Aorta (tissue), 5 donors: ENCODE measurements at regions of chr3 and their contacts with region 1.

Region 1: GRCh38 chr3:150114873-150115540 is 144.3 kb upstream of the PFN2 start:
- DNase-seq: no peak
- ATAC-seq: no peak
- H3K4me3 ChIP-seq: no peak overlapping the region
- H3K27ac ChIP-seq: peak overlapping the region in 1 of 2 donors; percentile 12
- H3K4me1 ChIP-seq: peaks cover 0 to 11% of the 10 kb centered on the region in 2 donors
- H3K27me3 ChIP-seq: no peaks in the 10 kb centered on the region

Region 2: DNA sequence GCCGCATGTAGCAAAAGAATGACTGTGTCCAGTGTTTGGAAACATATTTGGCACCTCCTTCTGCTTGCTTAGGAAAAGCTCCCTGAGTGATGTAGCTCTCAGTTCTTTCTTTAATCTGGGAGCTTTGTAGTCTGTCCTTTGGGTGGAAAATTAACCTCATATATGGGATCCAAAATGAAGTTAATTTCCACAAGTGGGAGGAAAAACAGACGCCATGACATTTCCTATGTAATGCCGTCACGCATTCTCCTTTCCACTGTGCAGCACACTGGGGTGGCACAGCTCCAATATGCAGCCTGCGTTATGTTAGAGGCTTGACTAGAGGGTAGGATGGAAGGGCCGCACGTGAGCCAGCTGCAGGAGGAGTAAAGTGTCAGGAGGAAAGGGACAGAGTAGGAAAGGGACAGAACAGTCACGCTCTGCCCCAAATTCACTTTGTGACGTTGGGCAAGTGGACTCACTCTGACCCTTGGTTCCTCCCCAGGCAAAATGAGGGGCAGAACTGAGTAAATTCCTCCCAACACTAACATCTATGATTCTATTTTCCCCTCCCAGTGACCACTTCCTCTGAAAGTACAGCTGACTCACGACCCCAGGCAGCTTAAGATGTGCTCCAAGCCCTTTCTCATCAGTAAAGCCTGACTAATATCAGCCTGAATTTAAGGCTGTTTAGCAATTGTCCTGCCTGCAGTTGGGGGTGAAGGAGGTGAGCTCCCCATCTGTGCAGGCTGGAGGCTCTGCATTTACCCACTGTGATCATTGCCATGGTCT is 32.2 kb after region 1 on chr3:
- intact Hi-C with region 1: loop called in 1 of 2 experiments (anchors 5 kb)
- DNase-seq: peak; percentile 48 to 75
- ATAC-seq: no peak
- H3K4me3 ChIP-seq: peak overlapping the region in 1 of 2 donors; percentile 3
- H3K27ac ChIP-seq: peak overlapping the region; percentile 37 to 52
- H3K4me1 ChIP-seq: peaks cover 2% of the 10 kb centered on the region in 2 donors
- H3K27me3 ChIP-seq: no peaks in the 10 kb centered on the region